GM12878 (cell line): ENCODE measurements at regions of chr17 and their contacts with region 1.

Region 1: GRCh38 chr17:60720763-60721531 is 43.3 kb downstream of the BCAS3 start:
- DNase-seq: peak; percentile 24
- ATAC-seq: peak; percentile 76
- H3K4me3 ChIP-seq: no peak overlapping the region
- H3K27ac ChIP-seq: no peak overlapping the region
- H3K4me1 ChIP-seq: no peaks in the 10 kb centered on the region; the same call in none of the 2 replicates
- H3K27me3 ChIP-seq: no peaks in the 10 kb centered on the region
- CTCF ChIP-seq: peak; percentile 79 to 83 (median 79)
- EP300 ChIP-seq: no peak
- POLR2A ChIP-seq: no peak
- RAD21 ChIP-seq: peak; percentile 92

Region 2: GRCh38 chr17:60671483-60671882 is 49.5 kb before region 1 on chr17:
- CTCF ChIA-PET with region 1: no interaction called
- POLR2A ChIA-PET with region 1: no interaction called
- RAD21 ChIA-PET with region 1: no interaction called
- SMC1A ChIA-PET with region 1: no interaction called
- in situ Hi-C with region 1: no loop called
- intact Hi-C with region 1: no loop called
- DNase-seq: no peak
- ATAC-seq: no peak
- H3K4me3 ChIP-seq: no peak overlapping the region
- H3K27ac ChIP-seq: no peak overlapping the region
- H3K4me1 ChIP-seq: no peaks in the 10 kb centered on the region
- H3K27me3 ChIP-seq: no peaks in the 10 kb centered on the region
- CTCF ChIP-seq: no peak
- EP300 ChIP-seq: no peak
- POLR2A ChIP-seq: no peak
- RAD21 ChIP-seq: no peak

Region 3: GRCh38 chr17:60704170-60704569 is 16.8 kb before region 1 on chr17:
- CTCF ChIA-PET with region 1: interaction called, 11 read pairs
- POLR2A ChIA-PET with region 1: no interaction called
- RAD21 ChIA-PET with region 1: interaction called, 3 read pairs
- SMC1A ChIA-PET with region 1: no interaction called
- in situ Hi-C with region 1: no loop called
- intact Hi-C with region 1: no loop called
- DNase-seq: no peak
- ATAC-seq: no peak
- H3K4me3 ChIP-seq: no peak overlapping the region
- H3K27ac ChIP-seq: no peak overlapping the region
- H3K4me1 ChIP-seq: no peaks in the 10 kb centered on the region
- H3K27me3 ChIP-seq: no peaks in the 10 kb centered on the region
- CTCF ChIP-seq: no peak
- EP300 ChIP-seq: no peak
- POLR2A ChIP-seq: no peak
- RAD21 ChIP-seq: no peak

Region 4: DNA sequence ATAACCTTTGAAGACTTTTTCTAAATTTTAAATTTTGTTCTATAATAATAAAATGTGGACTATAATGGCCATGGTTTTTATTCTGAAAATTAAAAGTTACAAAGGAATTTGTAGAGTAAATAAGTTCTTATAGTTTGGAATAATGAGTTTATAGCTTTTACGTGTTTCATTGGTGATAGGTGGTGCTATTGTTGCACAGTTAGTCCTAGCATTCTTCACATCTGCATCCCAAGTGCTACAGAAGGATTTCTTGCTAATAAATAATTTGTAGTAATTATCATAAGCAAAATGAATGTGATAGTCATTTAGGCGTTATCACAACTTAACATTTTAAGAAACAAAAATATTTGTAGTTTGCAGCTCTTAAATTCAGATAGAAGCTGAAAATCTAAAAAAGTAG is 24.6 kb after region 1 on chr17:
- CTCF ChIA-PET with region 1: interaction called, 14 read pairs
- POLR2A ChIA-PET with region 1: no interaction called
- RAD21 ChIA-PET with region 1: no interaction called
- SMC1A ChIA-PET with region 1: interaction called, 3 read pairs
- in situ Hi-C with region 1: no loop called
- intact Hi-C with region 1: no loop called
- DNase-seq: no peak
- ATAC-seq: no peak
- H3K4me3 ChIP-seq: no peak overlapping the region
- H3K27ac ChIP-seq: no peak overlapping the region
- H3K4me1 ChIP-seq: 0 out of 2 replicates have a peak, but pooled peaks cover 2% of the 10 kb centered on the region
- H3K27me3 ChIP-seq: no peaks in the 10 kb centered on the region
- CTCF ChIP-seq: no peak; a peak in 1 of 6 replicates
- EP300 ChIP-seq: no peak
- POLR2A ChIP-seq: no peak
- RAD21 ChIP-seq: no peak

Region 5: DNA sequence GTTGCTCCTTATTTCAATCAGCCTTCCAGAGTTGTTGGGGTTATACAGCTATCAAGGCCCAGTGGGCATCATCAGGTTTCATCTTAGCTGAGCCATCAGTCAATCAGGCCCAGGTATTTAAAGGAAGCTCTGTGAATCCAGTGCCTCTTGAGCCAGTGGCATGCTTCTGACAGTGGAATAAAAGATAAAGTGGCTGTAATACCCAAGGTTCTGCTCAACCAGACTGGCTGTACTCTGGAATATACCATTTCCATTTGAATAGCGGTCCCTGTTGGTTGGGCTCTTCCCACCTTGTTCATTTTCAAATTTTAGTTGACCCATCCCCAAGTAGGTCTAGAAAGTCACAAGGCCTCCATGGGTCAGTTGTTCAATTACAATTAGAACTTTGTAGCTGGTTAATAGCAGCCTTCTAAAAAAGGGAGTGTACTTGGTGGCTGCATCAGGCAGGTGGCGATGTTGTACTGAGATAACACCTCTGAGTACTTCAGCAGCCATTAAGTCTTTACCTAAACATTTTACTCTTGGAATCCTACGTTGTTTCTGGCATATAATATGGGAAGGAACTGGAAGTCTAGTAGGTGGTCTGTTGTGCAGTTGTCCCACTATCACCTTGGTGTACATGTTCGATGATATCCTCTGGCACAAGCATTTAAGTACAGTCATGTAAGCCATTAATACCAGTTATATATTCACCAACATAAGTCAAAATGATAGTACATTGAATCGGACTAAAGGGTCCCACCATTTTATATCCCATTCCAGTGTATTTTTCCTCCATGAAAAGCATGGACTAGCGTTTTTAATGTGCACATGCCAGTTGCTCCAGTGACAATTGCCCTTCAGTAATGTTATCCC is 250.8 kb after region 1 on chr17:
- CTCF ChIA-PET with region 1: interaction called, 15 read pairs
- POLR2A ChIA-PET with region 1: no interaction called
- RAD21 ChIA-PET with region 1: interaction called, 7 read pairs
- SMC1A ChIA-PET with region 1: interaction called, 8 read pairs
- in situ Hi-C with region 1: no loop called
- intact Hi-C with region 1: loop called (anchors 5 kb)
- DNase-seq: peak; percentile 4
- ATAC-seq: peak; percentile 91
- H3K4me3 ChIP-seq: no peak overlapping the region
- H3K27ac ChIP-seq: no peak overlapping the region
- H3K4me1 ChIP-seq: no peaks in the 10 kb centered on the region
- H3K27me3 ChIP-seq: no peaks in the 10 kb centered on the region
- CTCF ChIP-seq: peak; percentile 64 to 84 (median 69)
- EP300 ChIP-seq: no peak
- POLR2A ChIP-seq: no peak
- RAD21 ChIP-seq: peak; percentile 74

Region 6: DNA sequence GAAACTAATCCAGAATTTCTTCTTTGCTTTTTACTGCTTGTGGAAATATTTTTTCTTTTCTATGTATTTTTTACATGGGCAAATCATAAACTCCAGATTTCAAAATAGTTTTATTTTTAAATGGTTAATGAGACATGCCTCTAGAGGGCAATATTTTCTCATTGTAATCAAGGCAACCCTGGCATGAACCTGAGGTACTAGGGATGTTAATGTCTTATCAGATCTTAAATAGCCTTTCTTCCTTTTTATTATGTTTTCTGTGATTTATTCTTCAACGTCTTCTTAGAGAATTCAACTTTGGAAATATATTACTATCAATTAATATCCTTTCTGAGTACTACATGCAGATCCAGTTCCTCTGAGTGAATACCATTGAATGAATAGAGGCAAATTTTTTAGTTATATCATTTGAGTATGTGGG is 281.4 kb after region 1 on chr17:
- CTCF ChIA-PET with region 1: interaction called, 11 read pairs
- POLR2A ChIA-PET with region 1: no interaction called
- RAD21 ChIA-PET with region 1: interaction called, 4 read pairs
- SMC1A ChIA-PET with region 1: interaction called, 4 read pairs
- in situ Hi-C with region 1: no loop called
- intact Hi-C with region 1: loop called (anchors 10 kb)
- DNase-seq: no peak
- ATAC-seq: peak; percentile 45; the same call in 2 of the 3 replicates
- H3K4me3 ChIP-seq: no peak overlapping the region
- H3K27ac ChIP-seq: no peak overlapping the region
- H3K4me1 ChIP-seq: no peaks in the 10 kb centered on the region
- H3K27me3 ChIP-seq: no peaks in the 10 kb centered on the region
- CTCF ChIP-seq: peak; percentile 34 to 57 (median 37); a peak in 5 of 6 replicates
- EP300 ChIP-seq: no peak
- POLR2A ChIP-seq: no peak
- RAD21 ChIP-seq: peak; percentile 74

Region 7: DNA sequence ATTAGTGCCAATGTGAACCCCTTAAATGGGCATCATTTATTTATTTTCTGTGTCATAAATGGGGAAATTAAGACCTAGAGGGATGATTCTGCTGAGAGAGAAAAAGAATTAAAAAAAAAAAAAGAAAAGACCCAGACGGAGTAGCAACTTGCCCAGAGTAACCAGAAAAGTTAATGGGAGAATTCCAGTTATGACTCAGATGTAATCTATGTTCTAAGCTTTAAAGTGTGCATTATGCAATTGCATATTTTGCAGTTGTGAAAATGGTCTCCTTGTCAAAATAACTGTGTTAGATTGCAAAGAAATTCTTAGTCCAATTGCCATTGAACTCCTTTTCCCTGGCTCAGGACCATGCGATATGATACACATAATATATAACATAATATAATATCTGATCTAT is 640.1 kb after region 1 on chr17:
- CTCF ChIA-PET with region 1: interaction called, 3 read pairs
- POLR2A ChIA-PET with region 1: no interaction called
- RAD21 ChIA-PET with region 1: interaction called, 3 read pairs
- SMC1A ChIA-PET with region 1: interaction called, 6 read pairs
- in situ Hi-C with region 1: no loop called
- intact Hi-C with region 1: loop called (anchors 10 kb)
- DNase-seq: no peak
- ATAC-seq: no peak
- H3K4me3 ChIP-seq: no peak overlapping the region
- H3K27ac ChIP-seq: no peak overlapping the region
- H3K4me1 ChIP-seq: no peaks in the 10 kb centered on the region
- H3K27me3 ChIP-seq: no peaks in the 10 kb centered on the region
- CTCF ChIP-seq: no peak
- EP300 ChIP-seq: no peak
- POLR2A ChIP-seq: no peak
- RAD21 ChIP-seq: no peak

Region 8: GRCh38 chr17:61389670-61390478 is 668.9 kb after region 1 on chr17:
- CTCF ChIA-PET with region 1: interaction called, 5 read pairs
- POLR2A ChIA-PET with region 1: no interaction called
- RAD21 ChIA-PET with region 1: interaction called, 3 read pairs
- SMC1A ChIA-PET with region 1: interaction called, 4 read pairs
- in situ Hi-C with region 1: loop called (anchors 5 kb)
- intact Hi-C with region 1: loop called (anchors 5 kb)
- DNase-seq: no peak
- ATAC-seq: peak; percentile 88
- H3K4me3 ChIP-seq: no peak overlapping the region
- H3K27ac ChIP-seq: no peak overlapping the region
- H3K4me1 ChIP-seq: no peaks in the 10 kb centered on the region
- H3K27me3 ChIP-seq: no peaks in the 10 kb centered on the region; a peak in 2 of 4 replicates
- CTCF ChIP-seq: peak; percentile 67 to 94 (median 76)
- EP300 ChIP-seq: no peak
- POLR2A ChIP-seq: no peak
- RAD21 ChIP-seq: peak; percentile 77